ENCODE measurements at regions of chr14 and their contacts with region 1.

Region 1: GRCh38 chr14:70873627-70874026 is 33.6 kb upstream of the PCNX1 start:
- DNase-seq: peak in 6 of 35 experiments; percentile 10 to 44 (median 20)
- ATAC-seq: peak in 3 of 4 experiments; percentile 36 to 68 (median 59)
- H3K4me3 ChIP-seq: no peak overlapping the region
- H3K4me3 Mint-ChIP-seq: no peak overlapping the region
- H3K27ac ChIP-seq: no peak overlapping the region
- H3K27ac Mint-ChIP-seq: peak overlapping the region; percentile 49 to 78
- H3K4me1 ChIP-seq: peaks cover 0 to 16% of the 10 kb centered on the region in 2 experiments
- H3K4me1 Mint-ChIP-seq: peaks cover 17 to 25% (median 22%) of the 10 kb centered on the region in 3 donors
- H3K27me3 ChIP-seq: no peaks in the 10 kb centered on the region
- H3K27me3 Mint-ChIP-seq: no peaks in the 10 kb centered on the region

Region 2: DNA sequence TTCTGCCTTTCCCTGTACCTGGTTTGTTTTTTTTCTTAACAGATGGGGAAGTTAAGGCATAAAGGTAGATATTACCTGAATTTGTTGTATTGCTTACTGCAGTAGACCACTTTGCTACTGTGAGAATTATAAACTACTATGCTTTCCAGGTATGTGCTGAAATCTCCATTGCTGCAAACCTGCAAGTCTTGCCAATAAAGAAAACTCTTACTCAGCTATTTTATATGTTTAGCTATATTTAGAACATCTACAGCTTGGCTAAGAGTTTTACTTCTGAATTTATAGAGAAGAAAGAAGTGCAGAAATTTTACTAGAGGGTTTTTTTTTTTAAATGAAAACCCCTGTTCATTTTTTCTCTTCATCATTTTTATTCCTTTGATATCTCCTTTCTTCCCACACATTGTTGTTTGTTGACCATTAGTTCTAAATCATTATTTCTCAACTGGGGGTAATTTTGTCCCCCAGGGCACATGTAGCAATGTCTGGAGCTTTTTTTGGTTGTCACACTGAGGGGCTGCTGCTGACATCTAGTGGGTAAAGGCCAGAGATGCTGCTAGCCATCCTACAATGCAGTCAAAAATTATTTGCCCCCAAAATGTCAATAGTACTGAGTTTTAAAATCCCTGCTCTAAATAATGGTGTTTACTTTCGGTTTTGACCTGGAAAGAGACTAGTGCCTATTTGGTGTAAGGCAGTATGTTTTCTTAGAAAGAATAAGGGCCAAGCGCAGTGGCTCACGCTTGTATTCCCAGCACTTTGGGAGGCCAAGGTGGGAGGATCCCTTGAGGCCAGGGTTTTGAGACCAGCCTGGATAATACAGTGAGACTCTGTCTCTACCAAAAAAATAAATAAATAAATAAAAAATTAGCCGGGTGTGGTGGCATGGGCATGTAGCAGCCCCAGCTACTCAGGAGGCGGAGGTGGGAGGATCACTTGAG is 82.2 kb after region 1 on chr14:
- CTCF ChIA-PET with region 1: interaction called in 1 of 2 experiments, 10 read pairs
- POLR2A ChIA-PET with region 1: no interaction called
- DNase-seq: peak; percentile 18 to 76 (median 45)
- ATAC-seq: peak; percentile 72 to 94 (median 79)
- H3K4me3 ChIP-seq: no peak overlapping the region
- H3K4me3 Mint-ChIP-seq: no peak overlapping the region
- H3K27ac ChIP-seq: no peak overlapping the region
- H3K27ac Mint-ChIP-seq: peak overlapping the region; percentile 54 to 74
- H3K4me1 ChIP-seq: peaks cover 0 to 10% of the 10 kb centered on the region in 2 experiments
- H3K4me1 Mint-ChIP-seq: peaks cover 41 to 47% (median 44%) of the 10 kb centered on the region in 3 donors
- H3K27me3 ChIP-seq: no peaks in the 10 kb centered on the region
- H3K27me3 Mint-ChIP-seq: no peaks in the 10 kb centered on the region